AG04450 (cell line): ENCODE measurements at regions of chr1 and their contacts with region 1.

Region 1: GRCh38 chr1:209805875-209806760 is at the start of gene IRF6:
- DNase-seq: no peak
- H3K4me3 ChIP-seq: peak within 1 kb of the TSS; percentile 54
- H3K27ac ChIP-seq: no peak within 1 kb of the TSS
- H3K27me3 ChIP-seq: no peaks in the 10 kb centered on the region
- CTCF ChIP-seq: no peak
- polyA plus RNA-seq, gene IRF6: 0.67 and 1.0 TPM in 2 replicates

Region 2: GRCh38 chr1:209777587-209777986 is 28.5 kb before region 1 on chr1:
- CTCF ChIA-PET with region 1: no interaction called
- POLR2A ChIA-PET with region 1: no interaction called
- DNase-seq: no peak
- H3K4me3 ChIP-seq: no peak overlapping the region
- H3K27ac ChIP-seq: no peak overlapping the region
- H3K27me3 ChIP-seq: no peaks in the 10 kb centered on the region
- CTCF ChIP-seq: no peak

Region 3: DNA sequence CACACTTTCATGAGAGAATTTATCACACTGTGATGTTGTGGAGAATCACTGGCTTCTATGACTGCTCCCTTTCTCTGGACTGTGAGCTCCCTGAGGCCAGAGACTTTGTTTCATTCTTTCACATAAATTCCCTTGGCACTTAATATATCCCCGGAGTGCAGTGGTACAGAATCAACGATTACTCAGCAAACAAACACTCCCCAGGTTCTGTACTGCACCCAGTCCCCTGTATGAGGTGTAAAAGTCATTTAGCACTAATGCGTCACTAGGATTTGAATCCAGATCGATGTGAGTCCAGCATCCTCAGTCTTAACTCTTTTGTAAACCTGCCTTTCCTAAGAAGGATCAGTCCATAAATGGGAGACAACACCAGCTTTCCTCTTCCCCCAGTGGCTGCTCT is 14.9 kb after region 1 on chr1:
- CTCF ChIA-PET with region 1: interaction called, 85 read pairs
- POLR2A ChIA-PET with region 1: no interaction called
- DNase-seq: no peak
- H3K4me3 ChIP-seq: no peak overlapping the region
- H3K27ac ChIP-seq: no peak overlapping the region
- H3K27me3 ChIP-seq: no peaks in the 10 kb centered on the region
- CTCF ChIP-seq: no peak

Region 4: GRCh38 chr1:209860293-209860881 is 54.3 kb after region 1 on chr1:
- CTCF ChIA-PET with region 1: no interaction called
- POLR2A ChIA-PET with region 1: no interaction called
- DNase-seq: no peak
- H3K4me3 ChIP-seq: no peak overlapping the region
- H3K27ac ChIP-seq: no peak overlapping the region
- H3K27me3 ChIP-seq: no peaks in the 10 kb centered on the region
- CTCF ChIP-seq: peak; percentile 93